Heart right ventricle (tissue), 16 donors: ENCODE measurements at regions of chr18 and their contacts with region 1.

Region 1: GRCh38 chr18:58128381-58129374 is 84.7 kb downstream of the NEDD4L start:
- DNase-seq: no peak
- ATAC-seq: no peak
- H3K4me3 ChIP-seq: no peak overlapping the region
- H3K27ac ChIP-seq: no peak overlapping the region
- H3K4me1 ChIP-seq: no peaks in the 10 kb centered on the region
- H3K27me3 ChIP-seq: no peaks in the 10 kb centered on the region
- CTCF ChIP-seq: no peak

Region 2: DNA sequence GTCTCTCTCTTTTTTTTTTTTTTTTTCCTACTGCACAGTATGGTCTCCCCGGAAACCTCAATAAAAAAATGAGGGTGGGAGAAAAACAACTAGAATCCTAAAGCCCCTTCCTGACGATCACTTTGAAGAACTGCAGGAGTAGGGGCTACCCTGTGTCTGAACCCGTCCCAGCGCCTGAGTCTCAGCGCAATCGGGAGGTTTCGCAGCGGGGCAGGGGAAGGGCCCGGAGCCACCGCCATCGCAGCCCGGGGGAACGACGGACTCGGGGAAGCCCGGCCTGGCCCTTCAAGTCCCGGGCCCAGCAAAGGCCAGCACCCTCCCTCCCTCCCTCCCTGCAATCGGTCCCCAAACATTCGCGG is 507.5 kb before region 1 on chr18:
- intact Hi-C with region 1: loop called in 2 of 10 experiments (anchors 10 kb)
- DNase-seq: no peak
- ATAC-seq: peak; percentile 10 to 66 (median 46)
- H3K4me3 ChIP-seq: peak overlapping the region; percentile 71 to 89 (median 80)
- H3K27ac ChIP-seq: peak overlapping the region; percentile 72 to 95 (median 90)
- H3K4me1 ChIP-seq: peaks cover 0 to 37% (median 19%) of the 10 kb centered on the region in 9 donors
- H3K27me3 ChIP-seq: no peaks in the 10 kb centered on the region
- CTCF ChIP-seq: no peak

Region 3: DNA sequence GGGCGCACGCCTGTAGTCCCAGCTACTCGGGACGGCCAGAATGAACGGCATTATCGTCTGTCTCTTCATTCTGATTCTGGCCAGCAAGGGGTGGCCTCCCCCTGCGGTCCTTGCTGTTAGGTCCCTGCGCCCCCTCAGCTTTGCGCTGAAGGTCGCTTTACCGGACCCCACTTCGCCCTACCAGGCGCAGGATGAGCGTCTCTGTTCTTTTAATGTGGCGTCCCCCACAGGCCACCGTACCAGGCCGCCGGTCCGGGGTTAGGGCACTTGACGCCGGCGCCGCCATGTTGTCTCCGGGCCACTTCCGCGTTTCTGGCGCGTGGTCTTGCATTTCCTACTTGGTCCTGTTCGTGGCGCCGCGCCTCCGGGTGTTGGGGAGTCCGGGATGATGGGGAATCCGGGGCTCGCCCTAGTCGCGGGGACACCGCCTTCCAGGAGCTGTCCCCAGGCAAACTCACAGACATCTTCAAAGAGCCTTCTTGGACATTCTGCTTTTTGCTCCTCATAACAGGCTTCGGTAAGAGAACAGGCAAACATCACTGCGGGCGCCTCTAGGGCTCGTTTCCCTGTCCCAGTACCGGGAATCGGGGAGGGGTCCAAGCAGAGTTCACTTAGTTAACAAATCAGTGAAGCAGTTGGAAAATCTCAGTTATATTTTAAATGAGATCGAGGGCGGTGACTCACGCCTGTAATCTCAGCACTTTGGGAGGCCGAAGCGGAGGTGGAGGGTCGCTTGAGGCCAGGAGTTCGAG is 498.5 kb before region 1 on chr18:
- intact Hi-C with region 1: loop called in 3 of 10 experiments (anchors 10 kb)
- DNase-seq: peak; percentile 97
- ATAC-seq: peak; percentile 97 to 100 (median 99)
- H3K4me3 ChIP-seq: peak overlapping the region; percentile 50 to 77 (median 64)
- H3K27ac ChIP-seq: peak overlapping the region in 9 of 10 donors; percentile 71 to 91 (median 77)
- H3K4me1 ChIP-seq: peaks cover 0 to 19% (median 7%) of the 10 kb centered on the region in 9 donors
- H3K27me3 ChIP-seq: no peaks in the 10 kb centered on the region
- CTCF ChIP-seq: peak; percentile 39 to 92 (median 78)

Region 4: GRCh38 chr18:57649556-57650500 is 478.9 kb before region 1 on chr18:
- intact Hi-C with region 1: loop called in 4 of 10 experiments (anchors 10 kb)
- DNase-seq: no peak
- ATAC-seq: peak in 5 of 8 donors; percentile 35 to 84 (median 65)
- H3K4me3 ChIP-seq: no peak overlapping the region
- H3K27ac ChIP-seq: peak overlapping the region in 5 of 10 donors; percentile 15 to 72 (median 32)
- H3K4me1 ChIP-seq: peaks cover 0 to 18% (median 0%) of the 10 kb centered on the region in 9 donors
- H3K27me3 ChIP-seq: no peaks in the 10 kb centered on the region
- CTCF ChIP-seq: no peak

Region 5: GRCh38 chr18:57881818-57882413 is 246.8 kb before region 1 on chr18:
- intact Hi-C with region 1: loop called in 8 of 10 experiments (anchors 2 to 5 kb)
- DNase-seq: peak; percentile 19 to 75
- ATAC-seq: peak in 7 of 8 donors; percentile 77 to 92 (median 89)
- H3K4me3 ChIP-seq: no peak overlapping the region
- H3K27ac ChIP-seq: no peak overlapping the region
- H3K4me1 ChIP-seq: peaks cover 0 to 4% (median 0%) of the 10 kb centered on the region in 9 donors
- H3K27me3 ChIP-seq: no peaks in the 10 kb centered on the region
- CTCF ChIP-seq: peak; percentile 69 to 93 (median 89)

Region 6: GRCh38 chr18:58051765-58052460 is 76.8 kb before region 1 on chr18:
- intact Hi-C with region 1: loop called in 2 of 10 experiments (anchors 5 kb)
- DNase-seq: no peak
- ATAC-seq: no peak
- H3K4me3 ChIP-seq: no peak overlapping the region
- H3K27ac ChIP-seq: no peak overlapping the region
- H3K4me1 ChIP-seq: peaks cover 0 to 6% (median 0%) of the 10 kb centered on the region in 9 donors
- H3K27me3 ChIP-seq: no peaks in the 10 kb centered on the region
- CTCF ChIP-seq: peak in 6 of 9 donors; percentile 10 to 47 (median 32)

Region 7: DNA sequence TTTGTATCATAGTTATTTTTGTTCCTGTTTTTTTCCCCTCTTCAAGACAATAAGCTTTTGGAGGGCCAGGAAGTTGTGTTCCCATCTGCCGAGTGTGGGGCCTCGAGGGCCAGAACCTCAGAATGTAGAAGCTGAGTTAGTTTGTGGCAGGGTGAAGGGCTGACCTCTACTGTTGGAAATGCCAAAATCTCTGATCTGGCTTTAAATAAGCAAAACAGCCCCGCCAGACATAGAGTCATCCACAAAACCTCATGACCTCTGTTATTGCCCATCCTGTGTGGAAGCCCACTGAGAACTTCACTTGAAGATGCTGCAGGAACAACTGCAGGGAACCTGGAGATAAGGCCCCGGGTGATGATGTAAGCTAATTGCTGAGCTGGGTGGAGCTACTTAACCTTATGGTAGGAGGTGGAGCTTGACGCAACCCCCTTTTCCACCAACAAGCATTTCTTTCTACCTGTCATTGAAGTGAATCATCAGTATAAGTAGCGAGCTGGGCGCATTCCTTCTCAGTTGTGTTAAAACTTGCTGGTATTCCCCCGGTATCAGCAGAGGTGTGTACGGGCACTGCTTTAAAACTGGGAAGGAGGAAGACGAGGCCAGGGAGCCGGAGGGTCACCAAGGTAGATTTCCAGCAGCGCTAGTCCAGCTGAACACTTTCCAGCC is 92.5 kb after region 1 on chr18:
- intact Hi-C with region 1: no loop called
- DNase-seq: no peak
- ATAC-seq: no peak
- H3K4me3 ChIP-seq: no peak overlapping the region
- H3K27ac ChIP-seq: no peak overlapping the region
- H3K4me1 ChIP-seq: peaks cover 5 to 45% (median 19%) of the 10 kb centered on the region in 9 donors
- H3K27me3 ChIP-seq: peaks cover 0 to 16% (median 0%) of the 10 kb centered on the region in 7 donors
- CTCF ChIP-seq: no peak